Mammary epithelial cell (primary cell): ENCODE measurements at regions of chr1 and their contacts with region 1.

Region 1: GRCh38 chr1:181166377-181167196 is 78.1 kb downstream of the IER5 start:
- DNase-seq: peak; percentile 66
- H3K4me3 ChIP-seq: no peak overlapping the region
- H3K27ac ChIP-seq: no peak overlapping the region
- H3K4me1 ChIP-seq: no peaks in the 10 kb centered on the region
- H3K27me3 ChIP-seq: no peaks in the 10 kb centered on the region
- CTCF ChIP-seq: peak; percentile 86 to 92

Region 2: DNA sequence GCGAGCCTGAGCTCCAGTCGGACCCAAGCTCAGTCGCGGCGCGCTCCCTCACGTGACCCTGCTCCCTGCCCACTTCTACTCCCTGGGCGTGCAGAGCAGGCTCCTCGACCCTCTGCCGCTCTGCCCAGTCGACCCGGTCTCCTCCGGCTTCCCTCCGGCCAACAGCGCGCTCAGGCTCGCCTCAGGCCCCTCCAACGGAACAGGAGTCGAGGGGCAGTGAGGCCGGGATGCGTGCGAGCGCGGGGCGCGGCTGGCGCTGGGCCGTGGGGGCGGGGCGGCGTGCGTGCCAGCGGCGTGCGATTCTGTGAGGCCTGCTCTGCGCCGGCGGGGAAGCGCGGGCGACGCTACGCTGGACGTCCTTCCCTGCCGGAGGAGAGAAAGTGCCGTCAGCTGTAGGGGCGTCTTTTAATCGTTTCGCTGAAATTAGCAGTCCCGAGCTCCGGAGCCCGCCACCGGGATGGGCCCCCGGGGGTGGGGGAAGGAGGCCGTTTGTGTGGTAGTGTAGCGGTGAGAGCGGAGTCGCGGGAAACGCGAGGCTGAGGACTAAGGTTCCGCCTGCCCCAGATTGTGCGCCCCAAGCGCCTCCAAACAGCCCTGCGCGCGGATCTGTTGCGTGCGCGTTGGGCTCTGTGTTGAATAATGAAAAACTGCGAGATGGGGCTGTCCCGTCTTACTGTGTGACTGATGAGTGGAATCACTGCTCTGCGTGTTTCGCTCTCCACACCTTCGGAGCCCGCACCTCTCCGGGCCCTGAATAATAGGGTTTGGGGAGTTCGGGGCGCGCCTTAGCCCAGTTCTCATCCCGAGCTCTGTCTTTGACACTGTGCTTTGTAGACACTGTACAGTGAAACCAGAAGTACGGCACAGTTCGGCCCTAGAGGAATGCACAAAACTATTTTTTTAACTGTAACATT is 664.0 kb before region 1 on chr1 and contains the start of gene ACBD6:
- CTCF ChIA-PET with region 1: no interaction called
- dilution Hi-C with region 1: loop called (anchors 10 kb)
- in situ Hi-C with region 1: no loop called
- intact Hi-C with region 1: no loop called
- DNase-seq: peak; percentile 89
- H3K4me3 ChIP-seq: peak within 1 kb of the TSS; percentile 62 to 91 (median 67)
- H3K27ac ChIP-seq: peak within 1 kb of the TSS; percentile 82
- H3K4me1 ChIP-seq: peaks cover 11% of the 10 kb centered on the region
- H3K27me3 ChIP-seq: no peaks in the 10 kb centered on the region
- CTCF ChIP-seq: peak in 1 of 2 donors; percentile 28
- total RNA-seq, gene ACBD6: 50.7 to 77.8 TPM

Region 3: GRCh38 chr1:180533266-180533987 is 633.2 kb before region 1 on chr1:
- CTCF ChIA-PET with region 1: no interaction called
- dilution Hi-C with region 1: no loop called
- in situ Hi-C with region 1: no loop called
- intact Hi-C with region 1: loop called (anchors 5 kb)
- DNase-seq: peak; percentile 33
- H3K4me3 ChIP-seq: no peak overlapping the region
- H3K27ac ChIP-seq: no peak overlapping the region
- H3K4me1 ChIP-seq: peaks cover 15% of the 10 kb centered on the region
- H3K27me3 ChIP-seq: no peaks in the 10 kb centered on the region
- CTCF ChIP-seq: peak; percentile 43 to 64

Region 4: GRCh38 chr1:180631766-180632325 is 534.7 kb before region 1 on chr1 and contains the start of gene XPR1:
- CTCF ChIA-PET with region 1: no interaction called
- dilution Hi-C with region 1: no loop called
- in situ Hi-C with region 1: loop called in 1 of 2 experiments (anchors 25 kb)
- intact Hi-C with region 1: loop called (anchors 1 kb)
- DNase-seq: peak; percentile 97
- H3K4me3 ChIP-seq: peak within 1 kb of the TSS; percentile 83 to 99 (median 96)
- H3K27ac ChIP-seq: peak within 1 kb of the TSS; percentile 64
- H3K4me1 ChIP-seq: peaks cover 13% of the 10 kb centered on the region
- H3K27me3 ChIP-seq: no peaks in the 10 kb centered on the region
- CTCF ChIP-seq: peak; percentile 13 to 38
- total RNA-seq, gene XPR1: 44.1 to 109 TPM

Region 5: GRCh38 chr1:180881806-180882509 is 284.6 kb before region 1 on chr1:
- CTCF ChIA-PET with region 1: interaction called, 4 read pairs
- dilution Hi-C with region 1: loop called (anchors 5 kb)
- in situ Hi-C with region 1: loop called (anchors 5 kb)
- intact Hi-C with region 1: loop called (anchors 1 kb)
- DNase-seq: peak; percentile 16
- H3K4me3 ChIP-seq: no peak overlapping the region
- H3K27ac ChIP-seq: no peak overlapping the region
- H3K4me1 ChIP-seq: no peaks in the 10 kb centered on the region
- H3K27me3 ChIP-seq: no peaks in the 10 kb centered on the region
- CTCF ChIP-seq: peak; percentile 33 to 44

Region 6: DNA sequence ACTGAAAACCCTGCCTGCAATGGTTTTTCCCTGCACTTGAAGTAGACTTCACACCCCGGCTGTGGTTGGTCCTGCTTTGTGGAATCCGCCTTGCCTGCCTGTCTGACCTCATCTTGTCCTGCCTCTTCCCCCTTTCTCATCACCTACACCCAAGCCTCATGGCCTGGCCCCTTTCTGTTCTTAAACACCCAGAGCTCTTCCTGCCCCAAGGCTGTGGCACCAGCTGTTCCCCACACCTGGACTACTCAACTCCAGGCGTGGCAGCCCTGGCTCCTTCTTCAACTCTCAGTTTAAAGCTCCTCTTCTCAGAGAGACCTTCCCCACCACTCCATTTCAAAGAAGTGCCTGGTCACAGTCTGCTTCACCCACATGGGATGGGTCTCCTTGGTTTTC is 226.9 kb before region 1 on chr1:
- CTCF ChIA-PET with region 1: no interaction called
- dilution Hi-C with region 1: loop called (anchors 5 kb)
- in situ Hi-C with region 1: no loop called
- intact Hi-C with region 1: no loop called
- DNase-seq: no peak
- H3K4me3 ChIP-seq: no peak overlapping the region
- H3K27ac ChIP-seq: no peak overlapping the region
- H3K4me1 ChIP-seq: no peaks in the 10 kb centered on the region
- H3K27me3 ChIP-seq: no peaks in the 10 kb centered on the region
- CTCF ChIP-seq: no peak

Region 7: DNA sequence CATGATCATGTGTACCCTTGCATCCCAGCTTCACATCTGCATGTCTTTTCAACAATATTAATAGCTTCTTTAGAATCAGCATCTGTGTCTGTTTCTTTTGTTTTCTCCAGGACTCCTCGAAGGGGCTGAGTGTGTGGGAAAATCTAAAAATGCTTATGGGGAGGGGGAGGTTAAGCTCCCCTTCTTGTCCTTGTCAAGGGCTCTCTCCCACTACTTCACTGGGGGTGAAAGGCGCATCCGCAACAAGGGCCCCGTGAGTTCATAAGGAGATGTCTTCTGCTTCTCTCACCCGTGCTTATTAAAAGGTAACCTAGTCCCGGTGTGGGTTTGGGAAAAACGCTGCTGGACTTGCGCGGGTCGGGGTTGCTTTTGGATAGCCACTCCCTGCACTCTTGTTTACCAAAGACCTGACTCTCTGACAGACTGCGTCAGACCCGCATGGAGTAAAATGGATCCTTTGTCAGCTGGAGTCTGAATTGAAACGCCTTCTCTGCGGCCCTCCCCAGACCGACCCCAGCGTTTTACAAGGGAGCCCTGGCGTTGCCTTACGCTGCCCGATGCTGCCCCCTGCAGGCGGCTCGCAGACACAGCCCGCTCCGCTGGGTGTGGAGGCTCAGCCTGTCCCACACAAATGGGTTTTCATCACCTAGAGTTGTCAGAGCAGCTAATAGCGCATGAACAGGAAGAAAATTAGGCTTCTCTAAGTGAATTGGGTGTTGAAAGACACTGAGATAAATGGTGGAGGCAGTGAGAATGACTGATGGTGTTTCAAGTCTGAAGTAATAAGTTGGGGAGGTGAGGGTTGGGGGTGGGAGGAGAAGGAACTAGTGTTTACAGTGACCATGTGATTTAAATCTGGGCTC is 24.3 kb before region 1 on chr1:
- CTCF ChIA-PET with region 1: interaction called, 3 read pairs
- dilution Hi-C with region 1: no loop called
- in situ Hi-C with region 1: no loop called
- intact Hi-C with region 1: loop called (anchors 1 kb)
- DNase-seq: peak; percentile 84
- H3K4me3 ChIP-seq: peak overlapping the region in 1 of 3 experiments; percentile 33
- H3K27ac ChIP-seq: peak overlapping the region; percentile 63
- H3K4me1 ChIP-seq: peaks cover 49% of the 10 kb centered on the region
- H3K27me3 ChIP-seq: no peaks in the 10 kb centered on the region
- CTCF ChIP-seq: peak; percentile 95 to 97